PC-9 (cell line): ENCODE measurements at regions of chr15 and their contacts with region 1.

Region 1: DNA sequence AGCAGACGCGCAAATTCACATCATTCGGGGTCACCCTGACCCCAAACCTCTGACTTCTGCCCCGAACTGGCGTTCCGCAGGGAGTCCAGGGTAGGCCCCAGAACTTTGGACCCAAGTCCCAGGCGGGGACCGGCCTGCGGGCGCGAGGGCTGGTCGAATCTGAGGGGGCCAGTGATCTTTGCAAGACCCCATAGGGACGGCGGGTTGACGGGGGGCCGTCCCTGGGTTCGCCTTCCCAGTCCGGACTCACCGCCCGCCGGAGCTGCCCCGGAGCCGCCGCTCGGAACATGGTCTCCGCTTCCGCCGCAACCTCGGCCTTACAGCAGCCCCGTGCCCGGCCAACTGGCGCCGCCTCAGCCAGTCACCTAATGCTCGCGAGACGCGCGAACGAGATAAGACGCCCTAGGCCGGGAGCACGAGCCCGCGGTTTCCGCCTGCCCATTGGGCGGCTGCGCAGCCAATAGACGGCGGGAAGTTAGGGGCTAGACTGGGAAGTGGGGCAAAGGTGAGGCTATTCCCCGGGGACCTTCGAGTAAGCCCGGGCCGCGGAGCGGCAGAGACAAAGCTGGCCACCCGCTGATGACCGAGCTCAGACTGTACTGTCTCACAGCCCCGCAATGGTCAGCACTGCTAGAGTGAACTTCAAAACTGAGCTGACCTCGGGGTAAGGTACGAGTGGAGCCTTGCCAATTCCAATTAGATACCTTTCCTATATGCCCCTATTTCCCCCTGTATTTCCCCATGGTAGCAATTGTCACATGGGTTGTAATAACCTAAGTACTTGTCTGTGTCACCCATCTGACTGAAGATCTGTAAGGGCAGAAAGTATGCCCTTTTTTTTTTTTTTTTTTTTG is at the start of gene ETFA:
- DNase-seq: peak; percentile 91 to 94
- H3K4me3 ChIP-seq: peak within 1 kb of the TSS; percentile 94
- H3K27ac ChIP-seq: peak within 1 kb of the TSS; percentile 98
- H3K4me1 ChIP-seq: peaks cover 62% of the 10 kb centered on the region
- H3K27me3 ChIP-seq: no peaks in the 10 kb centered on the region
- CTCF ChIP-seq: no peak
- total RNA-seq, gene ETFA: 158 and 187 TPM in 2 replicates

Region 2: DNA sequence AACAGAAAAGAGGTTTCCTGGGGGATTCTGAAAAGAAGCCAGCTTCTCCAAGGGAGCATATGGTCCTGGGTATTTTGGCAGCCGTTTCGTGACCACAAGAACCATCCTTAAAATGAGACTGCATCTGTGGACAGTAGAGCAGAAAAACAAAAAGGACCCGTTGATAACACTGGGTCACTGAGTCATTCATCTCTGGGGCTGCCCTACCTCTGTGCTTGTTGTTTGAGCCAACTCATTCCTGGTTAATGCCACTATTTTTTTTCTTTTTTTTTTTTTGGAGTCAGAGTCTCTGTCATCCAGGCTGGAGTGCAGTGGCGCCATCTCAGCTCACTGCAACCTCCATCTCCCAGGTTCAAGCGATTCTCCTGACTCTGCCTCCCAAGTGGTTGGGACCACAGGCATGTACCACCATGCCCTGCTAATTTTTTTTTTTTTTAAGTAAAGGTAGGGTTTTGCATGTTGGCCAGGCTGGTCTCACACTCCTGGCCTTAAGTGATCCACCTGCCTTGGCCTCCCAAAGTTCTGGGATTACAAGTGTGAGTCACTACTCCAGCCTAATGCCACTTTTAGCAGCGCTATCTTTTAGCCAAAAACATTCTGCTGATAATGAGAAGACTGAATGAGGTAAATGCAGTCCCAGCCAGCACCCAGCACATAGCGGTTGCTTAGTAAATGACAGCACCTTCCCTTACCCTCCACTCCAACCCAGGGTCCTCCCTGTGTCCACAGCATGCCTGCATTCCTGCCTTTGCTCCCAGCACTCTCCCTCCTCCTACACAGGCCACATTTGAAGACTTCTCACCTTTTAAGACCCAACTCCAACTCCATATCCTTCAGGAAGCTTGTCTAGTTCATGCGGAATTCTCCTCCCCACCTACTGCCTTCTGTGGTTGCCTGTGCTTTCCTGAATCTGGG is 16.1 kb after region 1 on chr15:
- CTCF ChIA-PET with region 1: interaction called, 4 read pairs
- POLR2A ChIA-PET with region 1: no interaction called
- intact Hi-C with region 1: loop called (anchors 2 kb)
- DNase-seq: peak in 1 of 2 experiments; percentile 50
- H3K4me3 ChIP-seq: no peak overlapping the region
- H3K27ac ChIP-seq: no peak overlapping the region; the same call in 1 of the 2 replicates
- H3K4me1 ChIP-seq: peaks cover 22% of the 10 kb centered on the region
- H3K27me3 ChIP-seq: no peaks in the 10 kb centered on the region
- CTCF ChIP-seq: no peak

Region 3: GRCh38 chr15:76345880-76346668 is 34.7 kb after region 1 on chr15:
- CTCF ChIA-PET with region 1: no interaction called
- POLR2A ChIA-PET with region 1: interaction called, 6 read pairs
- intact Hi-C with region 1: loop called (anchors 5 kb)
- DNase-seq: no peak
- H3K4me3 ChIP-seq: peak overlapping the region; percentile 67
- H3K27ac ChIP-seq: no peak overlapping the region
- H3K4me1 ChIP-seq: peaks cover 32% of the 10 kb centered on the region
- H3K27me3 ChIP-seq: no peaks in the 10 kb centered on the region
- CTCF ChIP-seq: no peak